WTC11 (cell line): ENCODE measurements at regions of chr15 and their contacts with region 1.

Region 1: DNA sequence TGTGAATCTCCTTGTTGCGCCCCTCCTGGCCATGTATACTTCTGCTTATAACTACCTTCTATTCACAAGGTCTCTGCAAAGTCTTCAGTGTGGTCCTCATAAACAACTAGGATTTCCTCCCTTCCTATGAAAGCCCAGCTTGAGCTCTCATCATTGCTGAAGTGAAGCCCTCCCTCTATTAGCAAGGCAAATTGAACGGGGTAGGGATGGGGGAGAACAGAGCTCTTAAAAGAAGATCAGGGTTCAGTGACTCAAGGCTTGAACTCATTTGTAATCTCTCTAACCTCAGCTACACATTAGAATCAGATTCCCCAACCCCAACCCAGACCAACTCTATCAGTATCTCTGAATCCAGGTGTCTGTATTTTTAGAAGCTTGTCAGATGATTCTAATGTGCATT is 88.3 kb upstream of the ST8SIA2 start:
- DNase-seq: no peak
- ATAC-seq: peak; percentile 65
- H3K4me3 Mint-ChIP-seq: peak overlapping the region; percentile 19
- H3K27ac Mint-ChIP-seq: no peak overlapping the region
- H3K4me1 Mint-ChIP-seq: peaks cover 37% of the 10 kb centered on the region
- H3K27me3 Mint-ChIP-seq: peaks cover 4% of the 10 kb centered on the region; the same call in 1 of the 2 replicates
- CTCF ChIP-seq: no peak

Region 2: DNA sequence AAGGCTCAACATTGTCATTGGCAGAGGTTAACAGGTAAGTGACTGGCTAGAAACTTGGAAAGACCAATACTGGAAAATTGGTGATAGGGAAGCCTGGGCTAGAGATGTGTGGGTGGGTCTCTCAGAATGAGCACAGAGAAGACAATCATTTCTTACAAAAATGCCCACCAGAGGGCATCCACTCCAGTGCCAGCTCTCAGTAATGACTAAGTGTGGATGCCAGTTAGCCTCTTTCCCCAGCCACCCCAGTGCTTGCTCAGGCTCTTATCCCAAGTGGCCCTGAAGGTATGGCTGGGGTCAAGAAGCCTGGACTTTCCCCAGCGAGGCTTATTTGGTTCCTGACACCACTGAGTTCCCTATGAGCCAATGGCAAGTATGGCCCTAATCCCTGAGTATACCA is 27.6 kb before region 1 on chr15:
- CTCF ChIA-PET with region 1: interaction called, 11 read pairs
- POLR2A ChIA-PET with region 1: no interaction called
- DNase-seq: no peak
- ATAC-seq: peak; percentile 69
- H3K4me3 Mint-ChIP-seq: no peak overlapping the region
- H3K27ac Mint-ChIP-seq: no peak overlapping the region
- H3K4me1 Mint-ChIP-seq: no peaks in the 10 kb centered on the region
- H3K27me3 Mint-ChIP-seq: no peaks in the 10 kb centered on the region
- CTCF ChIP-seq: no peak

Region 3: GRCh38 chr15:92288755-92289154 is 16.6 kb before region 1 on chr15:
- CTCF ChIA-PET with region 1: no interaction called
- POLR2A ChIA-PET with region 1: no interaction called
- DNase-seq: no peak
- ATAC-seq: no peak
- H3K4me3 Mint-ChIP-seq: no peak overlapping the region
- H3K27ac Mint-ChIP-seq: no peak overlapping the region
- H3K4me1 Mint-ChIP-seq: peaks cover 11% of the 10 kb centered on the region
- H3K27me3 Mint-ChIP-seq: no peaks in the 10 kb centered on the region
- CTCF ChIP-seq: no peak